ENCODE measurements at regions of chr11 and their contacts with region 1.

Region 1: GRCh38 chr11:47552566-47553416 is at the start of gene CELF1:
- DNase-seq: peak; percentile 92
- H3K4me3 Mint-ChIP-seq: peak within 1 kb of the TSS; percentile 99
- H3K27ac Mint-ChIP-seq: peak within 1 kb of the TSS; percentile 97
- H3K4me1 Mint-ChIP-seq: peaks cover 40% of the 10 kb centered on the region
- H3K27me3 Mint-ChIP-seq: no peaks in the 10 kb centered on the region
- total RNA-seq, gene CELF1: 148 and 155 TPM in 2 replicates

Region 2: DNA sequence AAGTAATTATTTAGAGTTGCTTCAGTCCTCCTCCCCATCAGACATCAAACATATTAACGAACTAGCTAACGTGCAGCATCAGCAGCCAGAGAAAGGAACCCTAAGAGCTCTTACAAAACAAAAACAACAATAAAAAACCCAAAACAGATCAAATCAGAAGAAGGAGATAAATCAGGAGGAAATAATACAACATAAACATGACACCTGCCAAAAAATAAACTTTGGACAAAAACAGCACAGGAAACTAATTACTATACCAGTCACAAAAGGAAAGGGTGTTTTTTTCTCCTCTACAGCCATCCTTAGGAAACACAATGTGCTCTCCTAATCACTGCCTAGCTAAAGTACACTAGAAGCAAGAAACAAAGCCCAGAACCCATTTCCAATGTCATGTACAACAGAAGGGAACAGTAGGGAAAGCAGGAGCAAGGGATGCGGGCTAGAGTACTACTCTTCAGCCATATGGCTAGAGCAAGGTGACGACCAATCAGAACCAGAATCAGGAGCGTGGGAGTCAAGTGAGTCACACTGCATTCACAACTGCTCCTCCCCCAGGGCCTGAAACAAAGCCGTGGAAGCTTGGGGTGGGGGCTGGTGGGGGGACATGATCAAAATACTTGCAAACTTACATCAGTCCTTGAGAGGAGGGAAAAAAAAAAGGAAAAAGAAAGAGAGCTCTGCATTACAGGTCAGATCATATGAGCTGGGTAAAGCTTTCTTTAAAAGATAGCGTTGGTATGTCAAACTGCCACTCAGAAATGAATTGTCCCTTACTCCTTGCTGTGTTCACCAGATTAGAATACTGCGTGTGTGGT is 1569.9 kb before region 1 on chr11:
- intact Hi-C with region 1: no loop called
- DNase-seq: no peak
- H3K4me3 Mint-ChIP-seq: no peak overlapping the region
- H3K27ac Mint-ChIP-seq: peak overlapping the region; percentile 11
- H3K4me1 Mint-ChIP-seq: peaks cover 17% of the 10 kb centered on the region
- H3K27me3 Mint-ChIP-seq: no peaks in the 10 kb centered on the region

Region 3: DNA sequence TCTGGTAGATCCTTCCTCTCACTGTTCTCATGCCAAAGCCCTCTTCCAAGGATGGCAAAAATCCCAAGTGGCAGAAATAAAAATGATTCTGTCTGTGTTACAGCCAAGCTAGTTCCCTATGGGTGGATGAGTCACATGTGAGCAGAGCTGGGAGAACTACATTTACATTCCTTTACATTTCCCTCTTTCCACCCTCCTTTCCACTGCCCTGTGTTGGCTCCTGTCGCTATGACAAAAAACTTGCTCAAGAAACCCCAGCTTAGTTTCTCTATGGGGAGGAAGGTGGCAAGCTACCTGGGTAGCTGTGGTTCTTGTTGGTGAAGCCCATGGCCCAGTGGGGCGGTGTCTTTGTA is 348.2 kb before region 1 on chr11:
- intact Hi-C with region 1: no loop called
- DNase-seq: no peak
- H3K4me3 Mint-ChIP-seq: no peak overlapping the region
- H3K27ac Mint-ChIP-seq: no peak overlapping the region
- H3K4me1 Mint-ChIP-seq: no peaks in the 10 kb centered on the region
- H3K27me3 Mint-ChIP-seq: peaks cover 5% of the 10 kb centered on the region

Region 4: DNA sequence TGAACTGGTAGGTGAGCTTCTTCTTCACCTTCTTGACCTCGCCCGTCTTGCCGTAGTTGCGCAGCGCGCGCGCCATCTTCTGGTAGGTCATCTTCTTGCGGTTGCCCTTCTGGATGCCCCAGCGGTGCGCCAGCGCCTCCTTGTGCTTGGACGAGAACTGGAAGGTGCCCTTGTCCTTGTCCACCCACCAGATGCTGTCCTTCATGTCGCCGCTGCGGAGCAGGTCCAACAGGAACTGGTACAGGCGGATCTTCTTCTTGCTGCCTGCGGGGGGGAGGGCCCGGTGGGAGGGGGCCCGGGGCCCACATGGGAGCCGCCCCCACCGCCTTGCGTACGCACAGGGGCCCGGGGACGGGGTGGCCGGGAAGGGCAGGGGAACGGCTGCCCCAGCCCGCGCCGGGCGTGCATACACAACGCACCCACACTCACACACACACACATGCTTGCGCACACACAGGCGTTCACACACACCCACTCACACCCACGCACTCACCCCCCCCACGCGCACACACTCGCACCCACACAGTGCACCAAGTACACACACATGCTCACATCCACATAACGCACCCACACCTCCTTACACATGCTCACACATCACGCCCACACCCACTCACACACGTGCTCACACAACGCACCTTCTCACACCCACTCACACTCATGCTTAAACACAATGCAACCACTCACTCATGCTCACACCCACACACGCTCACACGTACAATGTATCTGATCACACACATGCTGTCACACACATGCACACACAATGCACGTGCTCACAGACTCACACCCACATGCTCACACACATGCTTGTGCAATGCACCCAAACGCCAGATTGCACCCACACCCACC is 197.3 kb before region 1 on chr11:
- intact Hi-C with region 1: no loop called
- DNase-seq: no peak
- H3K4me3 Mint-ChIP-seq: no peak overlapping the region
- H3K27ac Mint-ChIP-seq: no peak overlapping the region
- H3K4me1 Mint-ChIP-seq: peaks cover 6% of the 10 kb centered on the region
- H3K27me3 Mint-ChIP-seq: no peaks in the 10 kb centered on the region

Region 5: DNA sequence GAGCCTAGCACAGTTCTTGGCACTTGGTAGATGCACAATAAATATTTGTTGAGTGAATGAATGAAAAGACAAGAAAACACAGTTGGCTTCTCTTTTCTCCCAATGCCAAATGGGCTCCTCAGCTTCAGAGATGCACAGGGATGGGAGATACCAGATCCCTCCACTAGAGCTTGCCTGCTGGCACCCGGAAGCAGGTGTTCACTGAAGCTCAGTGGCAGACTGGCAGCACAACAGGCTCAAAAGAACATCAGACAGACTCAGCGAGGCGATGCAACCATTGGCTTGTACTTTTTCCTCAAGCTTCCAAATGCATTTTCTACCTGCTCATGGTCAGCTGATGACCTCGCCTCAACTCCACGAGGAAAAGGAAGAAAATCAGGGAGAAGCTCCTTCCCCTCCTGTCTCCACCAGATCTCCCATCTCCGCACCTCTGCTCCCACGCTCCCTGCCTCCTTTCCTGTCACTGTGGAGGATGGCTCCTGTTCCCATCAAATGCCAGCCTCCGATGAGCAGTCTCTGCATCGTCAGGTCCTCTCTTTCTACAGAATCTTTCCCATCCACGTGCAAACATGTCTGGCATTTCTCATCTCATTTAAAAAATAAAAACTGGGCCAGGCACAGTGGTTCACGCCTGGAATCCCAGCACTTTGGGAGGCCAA is 109.6 kb before region 1 on chr11:
- intact Hi-C with region 1: no loop called
- DNase-seq: no peak
- H3K4me3 Mint-ChIP-seq: no peak overlapping the region
- H3K27ac Mint-ChIP-seq: no peak overlapping the region
- H3K4me1 Mint-ChIP-seq: no peaks in the 10 kb centered on the region
- H3K27me3 Mint-ChIP-seq: no peaks in the 10 kb centered on the region

Region 6: GRCh38 chr11:47514825-47515647 is 37.8 kb before region 1 on chr11:
- intact Hi-C with region 1: loop called (anchors 2 kb)
- DNase-seq: no peak
- H3K4me3 Mint-ChIP-seq: peak overlapping the region; percentile 60
- H3K27ac Mint-ChIP-seq: peak overlapping the region; percentile 93
- H3K4me1 Mint-ChIP-seq: peaks cover 76% of the 10 kb centered on the region
- H3K27me3 Mint-ChIP-seq: no peaks in the 10 kb centered on the region

Region 7: GRCh38 chr11:47523468-47524225 is 29.1 kb before region 1 on chr11:
- intact Hi-C with region 1: loop called (anchors 1 kb)
- DNase-seq: peak; percentile 41
- H3K4me3 Mint-ChIP-seq: peak overlapping the region; percentile 54
- H3K27ac Mint-ChIP-seq: peak overlapping the region; percentile 89
- H3K4me1 Mint-ChIP-seq: peaks cover 50% of the 10 kb centered on the region
- H3K27me3 Mint-ChIP-seq: no peaks in the 10 kb centered on the region

Region 8: DNA sequence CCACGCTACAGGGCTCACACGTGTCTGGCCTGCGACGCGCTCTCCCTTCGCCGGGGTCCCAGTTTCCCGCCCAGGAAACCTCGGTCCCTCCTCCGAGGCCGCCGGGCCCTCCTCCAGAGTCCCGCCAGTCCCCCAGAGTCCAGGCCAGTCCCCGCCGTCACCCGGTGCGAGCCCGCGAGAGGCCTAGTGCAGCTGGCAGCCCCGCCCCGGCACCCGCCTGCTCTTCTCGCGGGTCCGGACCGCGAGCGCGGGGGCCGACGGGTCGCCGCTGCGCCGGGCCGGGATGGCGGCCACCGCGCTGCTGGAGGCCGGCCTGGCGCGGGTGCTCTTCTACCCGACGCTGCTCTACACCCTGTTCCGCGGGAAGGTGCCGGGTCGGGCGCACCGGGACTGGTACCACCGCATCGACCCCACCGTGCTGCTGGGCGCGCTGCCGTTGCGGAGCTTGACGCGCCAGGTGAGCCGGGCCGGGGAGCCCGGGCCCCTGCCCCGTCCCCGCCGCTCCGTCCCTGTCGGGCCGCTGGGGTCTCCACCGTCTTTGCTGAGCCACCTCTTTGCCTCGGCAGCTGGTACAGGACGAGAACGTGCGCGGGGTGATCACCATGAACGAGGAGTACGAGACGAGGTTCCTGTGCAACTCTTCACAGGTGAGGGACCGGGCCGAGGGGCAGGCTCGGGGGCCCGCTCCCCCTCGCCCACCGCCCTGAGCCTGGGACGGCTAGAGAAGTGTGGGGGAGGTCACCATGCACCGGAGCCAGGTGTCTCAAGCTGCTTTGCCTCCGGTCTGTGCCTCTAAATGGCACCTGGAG is 12.8 kb after region 1 on chr11 and contains the start of gene PTPMT1:
- intact Hi-C with region 1: loop called (anchors 1 kb)
- DNase-seq: peak; percentile 60
- H3K4me3 Mint-ChIP-seq: peak within 1 kb of the TSS; percentile 86
- H3K27ac Mint-ChIP-seq: peak within 1 kb of the TSS; percentile 74
- H3K4me1 Mint-ChIP-seq: peaks cover 21% of the 10 kb centered on the region
- H3K27me3 Mint-ChIP-seq: no peaks in the 10 kb centered on the region
- total RNA-seq, gene PTPMT1: 57.5 and 60.6 TPM in 2 replicates